ENCODE measurements at regions of chr16 and their contacts with region 1.

Region 1: GRCh38 chr16:56317998-56318826 is 107.1 kb downstream of the AMFR start:
- DNase-seq: peak; percentile 56 to 78
- H3K4me3 ChIP-seq: peak overlapping the region in 2 of 3 donors; percentile 5 to 50
- H3K27ac ChIP-seq: no peak overlapping the region
- H3K4me1 ChIP-seq: no peaks in the 10 kb centered on the region
- H3K27me3 ChIP-seq: no peaks in the 10 kb centered on the region
- CTCF ChIP-seq: peak; percentile 88 to 93 (median 91)
- POLR2A ChIP-seq: no peak

Region 2: DNA sequence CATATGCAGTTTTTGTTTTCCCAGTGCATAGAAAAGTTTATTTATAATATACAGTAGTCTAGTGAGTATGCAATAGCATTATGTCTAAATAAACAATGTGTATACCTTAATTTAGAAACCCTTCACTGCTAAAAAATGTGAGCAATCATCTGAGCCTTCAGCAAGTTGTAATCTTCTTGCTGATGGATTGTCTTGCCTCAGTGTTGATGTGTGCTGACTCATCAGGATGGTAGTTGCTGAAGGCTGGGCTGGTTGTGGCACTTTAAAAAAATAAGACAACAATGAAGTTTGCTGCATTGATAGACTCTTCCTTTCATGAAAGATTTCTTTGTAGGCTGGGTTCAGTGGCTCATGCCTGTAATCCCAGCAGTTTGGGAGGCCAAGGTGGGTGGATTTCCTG is 765.6 kb before region 1 on chr16:
- intact Hi-C with region 1: loop called (anchors 10 kb)
- DNase-seq: no peak
- H3K4me3 ChIP-seq: no peak overlapping the region
- H3K27ac ChIP-seq: no peak overlapping the region
- H3K4me1 ChIP-seq: no peaks in the 10 kb centered on the region
- H3K27me3 ChIP-seq: no peaks in the 10 kb centered on the region
- CTCF ChIP-seq: no peak
- POLR2A ChIP-seq: no peak

Region 3: DNA sequence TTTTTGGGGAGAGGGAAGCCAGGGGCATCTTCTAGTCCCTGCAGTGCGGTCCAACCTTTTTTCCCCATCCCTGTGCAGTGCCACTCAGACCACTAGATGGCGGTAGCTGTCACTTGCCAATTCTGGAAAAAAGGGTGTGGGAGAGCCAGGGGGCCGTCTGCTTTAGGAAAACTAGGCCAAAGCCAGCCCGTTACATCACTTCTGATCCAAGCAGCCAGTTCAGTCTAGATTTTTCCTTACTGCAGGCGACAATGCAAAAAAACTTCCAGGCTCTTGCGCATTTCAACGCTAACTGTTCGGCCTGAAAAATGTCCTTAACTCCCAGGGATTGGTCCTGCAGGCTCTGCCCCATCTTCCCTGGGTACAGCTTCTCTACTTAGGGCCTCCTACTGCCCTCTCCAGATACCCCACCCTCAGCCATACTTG is 373.8 kb before region 1 on chr16:
- intact Hi-C with region 1: loop called (anchors 10 kb)
- DNase-seq: peak; percentile 32 to 58
- H3K4me3 ChIP-seq: no peak overlapping the region
- H3K27ac ChIP-seq: no peak overlapping the region
- H3K4me1 ChIP-seq: no peaks in the 10 kb centered on the region
- H3K27me3 ChIP-seq: no peaks in the 10 kb centered on the region
- CTCF ChIP-seq: peak; percentile 58 to 83 (median 71)
- POLR2A ChIP-seq: no peak